Caco-2 (cell line): ENCODE measurements at regions of chr7 and their contacts with region 1.

Region 1: DNA sequence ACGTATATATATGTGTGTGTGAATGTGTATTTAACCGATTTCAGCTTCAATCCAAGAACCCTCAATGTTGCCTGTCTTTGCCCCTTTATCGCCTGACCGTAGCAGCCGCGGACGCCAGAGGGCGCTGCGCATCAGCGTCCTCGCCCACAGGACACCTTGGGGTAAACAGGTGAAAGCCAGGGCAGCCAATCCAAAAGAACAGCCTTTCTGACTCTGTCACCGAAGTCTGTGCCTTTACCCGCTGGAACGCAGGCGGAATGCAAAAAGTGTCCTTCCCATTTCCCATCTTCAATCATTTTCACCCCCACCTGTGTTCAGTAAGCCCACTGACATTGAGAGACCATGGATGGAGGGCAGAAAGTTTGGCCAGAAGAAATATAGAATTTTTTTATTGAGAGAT is 3.6 kb downstream of the NXPH1 start:
- DNase-seq: peak; percentile 73 to 86
- H3K4me3 ChIP-seq: peak overlapping the region; percentile 31; the same call in 1 of the 2 replicates
- H3K4me3 Mint-ChIP-seq: peak overlapping the region; percentile 70
- H3K27ac Mint-ChIP-seq: no peak overlapping the region
- H3K4me1 ChIP-seq: peaks cover 13% of the 10 kb centered on the region
- H3K4me1 Mint-ChIP-seq: peaks cover 14% of the 10 kb centered on the region
- H3K27me3 ChIP-seq: no peaks in the 10 kb centered on the region
- H3K27me3 Mint-ChIP-seq: peaks cover 12% of the 10 kb centered on the region
- CTCF ChIP-seq: peak; percentile 86 to 97

Region 2: GRCh38 chr7:8453535-8453934 is 16.6 kb after region 1 on chr7:
- CTCF ChIA-PET with region 1: no interaction called
- POLR2A ChIA-PET with region 1: no interaction called
- intact Hi-C with region 1: no loop called
- DNase-seq: no peak
- H3K4me3 ChIP-seq: no peak overlapping the region
- H3K4me3 Mint-ChIP-seq: no peak overlapping the region
- H3K27ac Mint-ChIP-seq: no peak overlapping the region
- H3K4me1 ChIP-seq: no peaks in the 10 kb centered on the region
- H3K4me1 Mint-ChIP-seq: no peaks in the 10 kb centered on the region
- H3K27me3 ChIP-seq: no peaks in the 10 kb centered on the region
- H3K27me3 Mint-ChIP-seq: no peaks in the 10 kb centered on the region
- CTCF ChIP-seq: no peak

Region 3: GRCh38 chr7:8566016-8566415 is 129.1 kb after region 1 on chr7:
- CTCF ChIA-PET with region 1: no interaction called
- POLR2A ChIA-PET with region 1: no interaction called
- intact Hi-C with region 1: loop called (anchors 5 kb)
- DNase-seq: no peak
- H3K4me3 ChIP-seq: no peak overlapping the region
- H3K4me3 Mint-ChIP-seq: no peak overlapping the region
- H3K27ac Mint-ChIP-seq: no peak overlapping the region
- H3K4me1 ChIP-seq: peaks cover 9% of the 10 kb centered on the region; the same call in 1 of the 2 replicates
- H3K4me1 Mint-ChIP-seq: peaks cover 9% of the 10 kb centered on the region
- H3K27me3 ChIP-seq: no peaks in the 10 kb centered on the region
- H3K27me3 Mint-ChIP-seq: no peaks in the 10 kb centered on the region
- CTCF ChIP-seq: no peak

Region 4: DNA sequence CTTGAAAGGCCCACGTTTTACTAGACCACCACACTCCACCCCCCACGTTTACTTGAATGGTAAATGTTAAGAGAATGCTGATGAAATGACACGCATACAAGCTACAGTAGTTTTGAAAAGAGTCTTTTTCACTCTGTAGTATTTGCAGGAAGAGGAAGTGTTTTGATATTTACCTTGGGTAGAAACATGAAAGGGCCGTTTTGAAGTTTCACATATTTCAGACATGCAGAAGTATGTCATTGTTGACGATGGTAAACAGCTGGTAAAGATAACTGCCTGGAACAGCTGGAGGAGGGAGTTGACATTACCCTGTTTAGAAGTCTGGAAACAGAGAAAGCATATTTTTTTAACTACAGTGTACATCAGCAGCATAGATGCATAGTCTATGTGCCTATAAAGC is 157.2 kb after region 1 on chr7:
- CTCF ChIA-PET with region 1: no interaction called
- POLR2A ChIA-PET with region 1: no interaction called
- intact Hi-C with region 1: loop called (anchors 1 kb)
- DNase-seq: peak in 1 of 2 experiments; percentile 65
- H3K4me3 ChIP-seq: no peak overlapping the region
- H3K4me3 Mint-ChIP-seq: peak overlapping the region; percentile 64
- H3K27ac Mint-ChIP-seq: peak overlapping the region; percentile 95
- H3K4me1 ChIP-seq: peaks cover 58% of the 10 kb centered on the region
- H3K4me1 Mint-ChIP-seq: peaks cover 46% of the 10 kb centered on the region
- H3K27me3 ChIP-seq: no peaks in the 10 kb centered on the region
- H3K27me3 Mint-ChIP-seq: no peaks in the 10 kb centered on the region
- CTCF ChIP-seq: no peak

Region 5: DNA sequence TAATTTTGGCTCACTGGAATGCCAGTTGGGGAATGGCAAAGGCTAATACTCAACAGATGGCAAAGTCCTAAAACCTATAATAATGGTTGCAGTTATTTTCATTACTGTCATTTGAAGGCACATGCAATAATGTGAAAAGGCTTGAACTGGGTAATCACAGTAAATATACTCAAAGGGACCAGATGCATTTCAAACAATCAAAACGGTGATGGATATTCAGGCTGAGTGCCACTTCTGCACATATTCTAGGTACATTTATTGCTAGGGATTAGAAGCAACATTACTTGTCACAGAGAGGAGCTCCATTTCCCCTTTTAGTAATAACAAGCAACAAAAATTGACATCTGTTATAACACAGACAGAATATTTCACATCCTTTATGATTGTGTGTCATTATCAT is 168.3 kb after region 1 on chr7:
- CTCF ChIA-PET with region 1: no interaction called
- POLR2A ChIA-PET with region 1: no interaction called
- intact Hi-C with region 1: loop called (anchors 5 kb)
- DNase-seq: no peak
- H3K4me3 ChIP-seq: no peak overlapping the region
- H3K4me3 Mint-ChIP-seq: no peak overlapping the region
- H3K27ac Mint-ChIP-seq: no peak overlapping the region
- H3K4me1 ChIP-seq: no peaks in the 10 kb centered on the region
- H3K4me1 Mint-ChIP-seq: no peaks in the 10 kb centered on the region
- H3K27me3 ChIP-seq: no peaks in the 10 kb centered on the region
- H3K27me3 Mint-ChIP-seq: peaks cover 3% of the 10 kb centered on the region
- CTCF ChIP-seq: no peak

Region 6: DNA sequence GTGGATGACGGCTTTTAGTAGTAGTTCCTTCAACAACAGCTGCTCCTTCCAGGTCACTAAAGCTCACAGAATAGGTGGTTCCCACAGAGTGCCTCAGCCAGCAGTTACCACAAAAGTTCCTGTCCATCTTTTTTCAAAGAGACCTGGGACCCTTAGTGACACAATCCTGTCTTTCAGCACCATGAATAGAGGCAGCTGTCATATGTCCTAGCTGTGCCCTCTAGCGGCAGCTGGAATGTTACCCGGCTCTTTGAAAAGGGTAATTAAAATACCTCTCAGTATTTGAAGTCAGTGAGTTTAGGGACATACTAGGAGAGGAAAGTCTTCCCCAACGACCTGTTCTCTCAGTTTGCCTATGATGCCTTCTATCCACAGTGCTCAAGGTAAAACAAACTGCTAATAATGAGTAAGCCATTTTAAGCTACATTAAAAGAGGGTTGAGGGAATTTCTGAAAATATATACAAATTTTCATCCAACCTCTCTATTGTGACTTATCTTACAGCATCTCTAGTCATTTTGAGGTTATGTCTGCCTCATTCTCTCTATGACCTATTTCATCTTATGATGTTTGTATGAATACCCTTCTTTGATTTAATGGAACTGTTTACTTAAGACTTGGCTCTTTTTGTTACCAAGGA is 287.2 kb after region 1 on chr7:
- CTCF ChIA-PET with region 1: interaction called, 7 read pairs
- POLR2A ChIA-PET with region 1: no interaction called
- intact Hi-C with region 1: loop called (anchors 1 kb)
- DNase-seq: peak; percentile 72 to 76
- H3K4me3 ChIP-seq: no peak overlapping the region
- H3K4me3 Mint-ChIP-seq: no peak overlapping the region
- H3K27ac Mint-ChIP-seq: no peak overlapping the region
- H3K4me1 ChIP-seq: no peaks in the 10 kb centered on the region
- H3K4me1 Mint-ChIP-seq: peaks cover 8% of the 10 kb centered on the region
- H3K27me3 ChIP-seq: no peaks in the 10 kb centered on the region
- H3K27me3 Mint-ChIP-seq: no peaks in the 10 kb centered on the region
- CTCF ChIP-seq: peak; percentile 83 to 90

Region 7: GRCh38 chr7:8785077-8785476 is 348.1 kb after region 1 on chr7:
- CTCF ChIA-PET with region 1: no interaction called
- POLR2A ChIA-PET with region 1: no interaction called
- intact Hi-C with region 1: loop called (anchors 1 kb)
- DNase-seq: peak in 1 of 2 experiments; percentile 3
- H3K4me3 ChIP-seq: no peak overlapping the region
- H3K4me3 Mint-ChIP-seq: no peak overlapping the region
- H3K27ac Mint-ChIP-seq: no peak overlapping the region
- H3K4me1 ChIP-seq: no peaks in the 10 kb centered on the region
- H3K4me1 Mint-ChIP-seq: no peaks in the 10 kb centered on the region
- H3K27me3 ChIP-seq: no peaks in the 10 kb centered on the region; the same call in 1 of the 2 replicates
- H3K27me3 Mint-ChIP-seq: peaks cover 9% of the 10 kb centered on the region
- CTCF ChIP-seq: peak in 1 of 2 experiments; percentile 20

Region 8: GRCh38 chr7:8823486-8823885 is 386.5 kb after region 1 on chr7:
- CTCF ChIA-PET with region 1: no interaction called
- POLR2A ChIA-PET with region 1: no interaction called
- intact Hi-C with region 1: loop called (anchors 1 kb)
- DNase-seq: peak in 1 of 2 experiments; percentile 7
- H3K4me3 ChIP-seq: no peak overlapping the region
- H3K4me3 Mint-ChIP-seq: no peak overlapping the region
- H3K27ac Mint-ChIP-seq: no peak overlapping the region
- H3K4me1 ChIP-seq: no peaks in the 10 kb centered on the region
- H3K4me1 Mint-ChIP-seq: no peaks in the 10 kb centered on the region
- H3K27me3 ChIP-seq: no peaks in the 10 kb centered on the region
- H3K27me3 Mint-ChIP-seq: peaks cover 4% of the 10 kb centered on the region
- CTCF ChIP-seq: peak in 1 of 2 experiments; percentile 6